ENCODE measurements at regions of chr5 and their contacts with region 1.

Region 1: GRCh38 chr5:134527146-134527960 is 1.9 kb downstream of the JADE2 start:
- DNase-seq: peak; percentile 97
- H3K27ac ChIP-seq: peak overlapping the region; percentile 98
- CTCF ChIP-seq: peak; percentile 98

Region 2: DNA sequence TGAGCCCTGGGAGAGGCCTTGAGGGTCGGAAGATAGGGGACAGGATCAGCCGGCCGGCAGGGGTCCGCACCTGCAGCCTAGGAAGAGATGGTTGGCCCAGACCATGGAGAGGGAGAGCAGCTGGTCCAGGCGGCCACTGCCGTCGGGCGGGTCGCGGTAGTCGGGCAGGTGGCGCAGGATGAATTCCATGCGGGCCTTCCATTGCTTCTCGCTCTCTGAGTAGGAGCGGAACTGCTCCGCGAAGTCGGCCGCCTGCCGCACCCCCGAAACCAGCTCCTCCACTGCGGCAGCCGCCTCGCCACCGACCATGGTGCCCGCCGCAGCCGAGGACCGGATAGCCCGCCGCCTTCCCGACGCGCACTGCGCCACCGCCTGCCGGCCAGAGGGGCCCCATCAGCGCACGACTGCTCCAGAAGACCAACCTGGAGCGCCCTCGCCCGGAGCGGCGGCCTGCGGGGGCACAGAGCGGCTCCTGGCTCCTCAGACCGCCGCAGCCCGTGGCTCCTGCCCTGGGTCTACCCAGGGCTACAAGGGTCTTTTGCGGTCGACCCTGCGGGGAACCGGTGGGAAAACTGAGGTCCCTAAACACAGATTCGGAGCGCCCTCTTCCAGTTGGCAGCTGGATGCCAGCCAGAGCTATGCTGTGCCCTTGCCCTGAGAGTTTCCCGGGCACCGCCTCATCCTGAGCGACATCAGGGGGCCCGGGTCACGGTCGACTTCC is 115.6 kb before region 1 on chr5 and contains the start of gene CDKN2AIPNL:
- CTCF ChIA-PET with region 1: interaction called, 34 read pairs
- POLR2A ChIA-PET with region 1: interaction called, 3 read pairs
- DNase-seq: peak; percentile 96
- H3K27ac ChIP-seq: peak within 1 kb of the TSS; percentile 80
- CTCF ChIP-seq: peak; percentile 95

Region 3: GRCh38 chr5:134465816-134466240 is 61.5 kb before region 1 on chr5:
- CTCF ChIA-PET with region 1: interaction called, 21 read pairs
- POLR2A ChIA-PET with region 1: interaction called, 11 read pairs
- DNase-seq: peak; percentile 97
- H3K27ac ChIP-seq: peak overlapping the region; percentile 100
- CTCF ChIP-seq: no peak

Region 4: DNA sequence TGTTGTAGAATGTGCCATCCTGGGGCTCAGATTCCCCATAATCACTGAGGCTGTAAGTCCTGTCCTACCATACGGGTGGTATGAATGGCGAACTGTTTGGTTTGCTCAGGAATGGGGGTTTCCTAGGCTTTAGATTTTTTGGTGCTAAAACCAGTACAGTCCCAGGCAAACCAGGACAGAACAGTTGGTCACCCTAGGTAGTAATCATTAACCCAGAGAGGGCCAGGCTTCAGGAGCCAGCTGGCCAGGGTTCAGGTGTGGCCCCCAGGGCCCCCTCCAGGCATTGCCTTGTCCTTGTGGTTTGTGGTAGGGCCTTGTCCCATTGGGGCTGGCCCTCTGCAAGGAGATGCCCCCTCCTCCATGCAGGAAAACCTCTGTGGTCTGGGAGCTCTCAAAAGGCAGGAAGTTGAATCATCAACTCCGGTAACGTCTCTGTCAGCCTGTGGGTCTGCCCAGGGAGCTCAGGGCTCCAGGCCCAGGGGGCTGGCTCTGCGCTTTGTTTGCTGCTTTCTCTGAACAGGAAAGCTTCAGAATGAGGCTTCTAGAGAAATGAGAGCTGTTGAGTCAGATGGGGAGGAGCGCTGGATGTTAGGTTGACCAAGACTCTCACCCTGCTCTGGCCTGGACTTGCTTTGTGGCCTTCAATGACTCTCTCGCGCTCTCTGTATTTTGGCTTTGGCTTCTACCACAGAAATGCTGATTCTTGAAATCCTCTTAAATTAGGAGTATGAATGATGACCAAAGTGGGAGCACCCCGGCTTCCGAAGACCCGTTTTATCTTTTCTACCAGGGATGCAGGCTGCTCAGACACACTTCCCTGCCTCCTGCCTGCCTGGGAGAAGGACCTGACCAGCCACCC is 24.0 kb before region 1 on chr5:
- CTCF ChIA-PET with region 1: interaction called, 5 read pairs
- POLR2A ChIA-PET with region 1: interaction called, 12 read pairs
- DNase-seq: peak; percentile 98
- H3K27ac ChIP-seq: peak overlapping the region; percentile 97
- CTCF ChIP-seq: no peak

Region 5: GRCh38 chr5:134511788-134512650 is 15.3 kb before region 1 on chr5:
- CTCF ChIA-PET with region 1: interaction called, 12 read pairs
- POLR2A ChIA-PET with region 1: no interaction called
- DNase-seq: peak; percentile 35
- H3K27ac ChIP-seq: peak overlapping the region; percentile 84
- CTCF ChIP-seq: no peak; the same call in 1 of the 2 replicates

Region 6: GRCh38 chr5:134570886-134571285 is 43.5 kb after region 1 on chr5:
- CTCF ChIA-PET with region 1: no interaction called
- POLR2A ChIA-PET with region 1: no interaction called
- DNase-seq: no peak
- H3K27ac ChIP-seq: 0 out of 2 replicates have a peak overlapping the region, but pooled peaks have one; percentile 59
- CTCF ChIP-seq: no peak

Region 7: GRCh38 chr5:134603059-134603458 is 75.7 kb after region 1 on chr5:
- CTCF ChIA-PET with region 1: no interaction called
- POLR2A ChIA-PET with region 1: no interaction called
- DNase-seq: peak; percentile 45
- H3K27ac ChIP-seq: peak overlapping the region; percentile 41
- CTCF ChIP-seq: no peak

Region 8: GRCh38 chr5:134738133-134738962 is 211.0 kb after region 1 on chr5 and contains the start of gene CAMLG:
- CTCF ChIA-PET with region 1: no interaction called
- POLR2A ChIA-PET with region 1: no interaction called
- DNase-seq: peak; percentile 93
- H3K27ac ChIP-seq: peak within 1 kb of the TSS; percentile 88
- CTCF ChIP-seq: peak; percentile 61

Measured in RWPE1 (cell line).